ENCODE measurements at regions of chr7 and their contacts with region 1.

Region 1: GRCh38 chr7:127392566-127393367 is at the start of gene ZNF800:
- DNase-seq: peak; percentile 94
- ATAC-seq: peak; percentile 84
- H3K4me3 ChIP-seq: peak within 1 kb of the TSS; percentile 89 to 95 (median 92)
- H3K4me3 Mint-ChIP-seq: peak within 1 kb of the TSS; percentile 99
- H3K27ac ChIP-seq: peak within 1 kb of the TSS; percentile 92 to 96
- H3K27ac Mint-ChIP-seq: peak within 1 kb of the TSS; percentile 99
- H3K4me1 ChIP-seq: peaks cover 16 to 33% of the 10 kb centered on the region in 2 donors
- H3K4me1 Mint-ChIP-seq: peaks cover 56% of the 10 kb centered on the region
- H3K27me3 ChIP-seq: no peaks in the 10 kb centered on the region
- H3K27me3 Mint-ChIP-seq: no peaks in the 10 kb centered on the region
- CTCF ChIP-seq: no peak
- total RNA-seq, gene ZNF800: 62.9 and 64.7 TPM in 2 replicates

Region 2: DNA sequence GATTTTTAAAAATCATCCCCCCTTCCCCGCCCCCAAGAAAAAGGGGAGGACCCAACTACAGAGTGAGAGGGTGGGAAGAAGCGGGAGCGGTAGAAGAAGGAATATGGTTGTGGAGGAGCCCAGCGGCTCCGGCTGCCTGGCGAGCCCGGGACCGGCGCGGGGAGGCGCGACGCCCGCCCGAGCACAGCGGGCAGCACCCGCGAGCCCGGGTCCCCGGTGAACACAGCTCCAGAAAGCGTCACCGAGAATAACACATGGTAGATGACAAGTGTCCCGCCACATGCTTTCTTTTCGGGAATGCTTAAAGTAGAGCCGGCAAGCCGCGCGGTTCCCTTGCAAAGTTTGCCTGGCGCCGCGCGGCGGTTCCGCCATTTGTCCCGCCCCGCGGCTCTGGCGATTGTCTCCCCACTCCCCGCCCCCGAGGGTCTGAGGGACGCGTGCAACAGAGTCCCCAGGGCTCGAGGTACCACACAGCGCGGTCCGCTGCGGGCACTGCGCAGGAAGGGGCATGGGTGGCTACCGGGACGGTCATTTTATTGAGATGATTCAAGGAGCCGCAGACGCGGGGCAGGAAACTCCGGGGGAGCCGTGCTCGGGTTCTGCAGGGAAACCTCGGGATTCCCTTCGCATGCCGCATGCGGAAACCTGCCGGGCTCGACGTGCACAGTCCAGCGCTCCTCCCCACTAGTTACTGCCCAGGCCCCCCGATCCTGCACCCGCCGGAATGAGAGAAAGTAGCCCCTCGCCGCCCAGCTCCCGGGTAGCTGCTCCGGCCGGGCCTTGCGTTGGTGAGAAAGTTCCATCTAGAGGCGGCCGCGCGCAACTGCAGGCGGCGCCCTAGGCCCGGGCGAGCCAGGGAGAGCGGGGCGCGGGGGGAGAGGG is 139.2 kb before region 1 on chr7:
- CTCF ChIA-PET with region 1: no interaction called
- POLR2A ChIA-PET with region 1: no interaction called
- intact Hi-C with region 1: loop called (anchors 5 kb)
- DNase-seq: peak; percentile 73
- ATAC-seq: peak; percentile 79
- H3K4me3 ChIP-seq: peak overlapping the region; percentile 58 to 94 (median 74)
- H3K4me3 Mint-ChIP-seq: peak overlapping the region; percentile 89
- H3K27ac ChIP-seq: no peak overlapping the region
- H3K27ac Mint-ChIP-seq: no peak overlapping the region
- H3K4me1 ChIP-seq: peaks cover 21 to 24% of the 10 kb centered on the region in 2 donors
- H3K4me1 Mint-ChIP-seq: peaks cover 20% of the 10 kb centered on the region
- H3K27me3 ChIP-seq: peaks cover 2 to 82% (median 52%) of the 10 kb centered on the region in 4 experiments
- H3K27me3 Mint-ChIP-seq: peaks cover 70% of the 10 kb centered on the region
- CTCF ChIP-seq: peak; percentile 87

Region 3: GRCh38 chr7:127347567-127348246 is 45.1 kb before region 1 on chr7:
- CTCF ChIA-PET with region 1: interaction called, 31 read pairs
- POLR2A ChIA-PET with region 1: no interaction called
- intact Hi-C with region 1: loop called (anchors 2 kb)
- DNase-seq: peak; percentile 85
- ATAC-seq: peak; percentile 99
- H3K4me3 ChIP-seq: peak overlapping the region in 4 of 5 experiments; percentile 25 to 59 (median 42)
- H3K4me3 Mint-ChIP-seq: peak overlapping the region; percentile 81
- H3K27ac ChIP-seq: no peak overlapping the region
- H3K27ac Mint-ChIP-seq: no peak overlapping the region
- H3K4me1 ChIP-seq: peaks cover 3 to 11% of the 10 kb centered on the region in 2 donors
- H3K4me1 Mint-ChIP-seq: peaks cover 23% of the 10 kb centered on the region
- H3K27me3 ChIP-seq: no peaks in the 10 kb centered on the region
- H3K27me3 Mint-ChIP-seq: no peaks in the 10 kb centered on the region
- CTCF ChIP-seq: peak; percentile 61

Region 4: DNA sequence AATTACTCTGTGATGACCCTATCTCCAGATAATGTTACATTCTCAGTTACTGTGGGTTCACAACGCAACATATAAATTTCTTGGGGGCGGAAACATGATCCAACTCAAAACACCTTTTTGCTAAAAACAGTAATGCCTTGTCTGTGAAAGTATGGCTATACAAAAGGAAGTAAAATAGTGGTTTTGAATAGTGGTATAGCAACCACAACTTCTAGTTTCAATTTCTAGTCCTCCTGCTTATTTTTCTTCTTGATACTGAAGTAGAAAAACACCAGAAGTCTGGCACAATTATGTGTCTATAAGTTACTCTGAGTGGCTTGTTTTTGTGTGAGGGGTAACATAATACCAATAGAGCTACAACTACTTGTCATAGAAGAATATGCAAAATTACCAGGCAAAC is 21.2 kb after region 1 on chr7:
- CTCF ChIA-PET with region 1: interaction called, 10 read pairs
- POLR2A ChIA-PET with region 1: interaction called, 12 read pairs
- intact Hi-C with region 1: loop called (anchors 1 kb)
- DNase-seq: peak; percentile 71
- ATAC-seq: peak; percentile 67
- H3K4me3 ChIP-seq: peak overlapping the region in 1 of 5 experiments; percentile 25
- H3K4me3 Mint-ChIP-seq: peak overlapping the region; percentile 83
- H3K27ac ChIP-seq: peak overlapping the region; percentile 64 to 80
- H3K27ac Mint-ChIP-seq: peak overlapping the region; percentile 90
- H3K4me1 ChIP-seq: peaks cover 71 to 75% of the 10 kb centered on the region in 2 donors
- H3K4me1 Mint-ChIP-seq: peaks cover 70% of the 10 kb centered on the region
- H3K27me3 ChIP-seq: no peaks in the 10 kb centered on the region
- H3K27me3 Mint-ChIP-seq: no peaks in the 10 kb centered on the region
- CTCF ChIP-seq: no peak

Region 5: GRCh38 chr7:127585044-127585953 is 192.5 kb after region 1 on chr7 and contains the start of gene GCC1:
- CTCF ChIA-PET with region 1: interaction called, 3 read pairs
- POLR2A ChIA-PET with region 1: interaction called, 3 read pairs
- intact Hi-C with region 1: loop called (anchors 1 kb)
- DNase-seq: peak; percentile 95
- ATAC-seq: peak; percentile 80
- H3K4me3 ChIP-seq: peak within 1 kb of the TSS; percentile 84 to 97 (median 95)
- H3K4me3 Mint-ChIP-seq: peak within 1 kb of the TSS; percentile 89
- H3K27ac ChIP-seq: peak within 1 kb of the TSS; percentile 55 to 89
- H3K27ac Mint-ChIP-seq: peak within 1 kb of the TSS; percentile 89
- H3K4me1 ChIP-seq: peaks cover 45 to 54% of the 10 kb centered on the region in 2 donors
- H3K4me1 Mint-ChIP-seq: peaks cover 73% of the 10 kb centered on the region
- H3K27me3 ChIP-seq: no peaks in the 10 kb centered on the region
- H3K27me3 Mint-ChIP-seq: no peaks in the 10 kb centered on the region
- CTCF ChIP-seq: no peak
- total RNA-seq, gene GCC1: 25.5 and 26.4 TPM in 2 replicates

Region 6: DNA sequence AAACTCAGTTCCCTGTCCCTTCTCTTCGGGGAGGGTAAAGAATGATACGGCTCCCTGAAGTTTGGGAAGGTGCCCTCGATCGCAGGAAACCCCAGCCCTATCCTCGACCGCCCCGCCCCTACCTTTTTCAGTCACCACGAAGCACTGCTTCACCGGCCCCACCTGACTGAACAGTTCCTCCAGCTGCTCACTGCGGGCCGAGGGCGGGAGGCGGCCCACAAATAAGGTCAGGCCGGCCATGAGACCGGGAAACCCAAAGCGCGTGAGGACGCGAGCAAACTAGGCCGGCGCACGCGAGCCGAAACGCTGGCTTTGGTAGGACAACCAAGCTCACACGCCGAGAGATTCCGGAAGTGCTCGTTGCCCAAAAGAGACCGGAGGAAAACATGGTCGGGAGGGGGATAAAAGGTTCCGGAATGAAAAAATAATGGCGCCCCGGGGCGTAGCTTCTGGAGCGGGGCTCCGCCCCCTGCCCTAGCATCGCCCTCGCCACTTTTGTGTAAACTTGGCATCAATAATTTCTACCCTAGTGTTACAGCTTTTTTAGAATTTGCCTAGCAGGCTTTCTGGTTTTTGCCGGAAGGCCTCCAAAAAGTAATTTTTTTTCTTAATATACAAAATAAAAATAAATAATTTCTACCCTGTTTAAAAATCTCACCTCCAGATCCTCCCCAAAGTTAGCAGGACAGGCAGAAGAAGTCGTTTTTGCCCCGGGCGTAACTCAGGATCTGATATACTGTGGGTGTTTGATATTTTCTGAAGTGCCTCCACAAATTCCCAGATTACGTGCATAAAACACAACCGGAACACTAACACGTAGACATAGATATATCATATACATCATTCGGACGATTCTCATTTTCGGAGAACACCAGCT is 951.0 kb after region 1 on chr7 and contains the start of gene RBM28:
- CTCF ChIA-PET with region 1: no interaction called
- POLR2A ChIA-PET with region 1: no interaction called
- intact Hi-C with region 1: loop called (anchors 5 kb)
- DNase-seq: peak; percentile 95
- ATAC-seq: peak; percentile 95
- H3K4me3 ChIP-seq: peak within 1 kb of the TSS; percentile 75 to 91 (median 81)
- H3K4me3 Mint-ChIP-seq: peak within 1 kb of the TSS; percentile 98
- H3K27ac ChIP-seq: peak within 1 kb of the TSS; percentile 71 to 76
- H3K27ac Mint-ChIP-seq: peak within 1 kb of the TSS; percentile 96
- H3K4me1 ChIP-seq: peaks cover 15 to 19% of the 10 kb centered on the region in 2 donors
- H3K4me1 Mint-ChIP-seq: peaks cover 28% of the 10 kb centered on the region
- H3K27me3 ChIP-seq: peaks cover 0 to 11% (median 1%) of the 10 kb centered on the region in 4 experiments
- H3K27me3 Mint-ChIP-seq: peaks cover 14% of the 10 kb centered on the region
- CTCF ChIP-seq: no peak
- total RNA-seq, gene RBM28: 46.2 and 52.8 TPM in 2 replicates

Measured in B cell (primary cell).